ENCODE measurements at regions of chr6 and their contacts with region 1.

Region 1: GRCh38 chr6:169536446-169537170 is 165.2 kb downstream of the WDR27 start:
- DNase-seq: peak; percentile 69
- ATAC-seq: peak; percentile 73
- H3K4me3 ChIP-seq: no peak overlapping the region
- H3K27ac ChIP-seq: no peak overlapping the region
- H3K4me1 ChIP-seq: peaks cover 12% of the 10 kb centered on the region
- H3K27me3 ChIP-seq: no peaks in the 10 kb centered on the region
- CTCF ChIP-seq: no peak

Region 2: DNA sequence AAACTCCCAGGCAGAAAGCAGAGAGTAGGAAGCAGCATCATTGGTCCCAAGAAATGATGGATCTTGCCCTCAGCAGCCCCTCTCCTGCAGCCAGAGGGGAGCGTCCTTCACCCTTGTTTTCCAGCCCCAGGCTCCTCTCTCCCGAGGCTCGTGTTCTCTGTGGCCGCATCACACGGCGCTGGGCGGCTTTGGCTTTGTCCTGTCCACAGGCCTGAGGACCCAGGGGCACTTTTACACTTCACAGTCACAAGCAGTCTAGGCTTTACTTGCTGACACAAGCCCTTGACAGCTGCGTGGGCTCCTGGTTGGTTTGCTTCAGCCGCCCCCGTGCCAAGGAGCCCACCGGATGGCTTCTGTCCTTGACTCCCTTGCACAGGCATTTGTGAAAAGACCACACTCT is 107.6 kb before region 1 on chr6:
- CTCF ChIA-PET with region 1: no interaction called
- POLR2A ChIA-PET with region 1: no interaction called
- intact Hi-C with region 1: no loop called
- DNase-seq: no peak
- ATAC-seq: no peak
- H3K4me3 ChIP-seq: no peak overlapping the region
- H3K27ac ChIP-seq: no peak overlapping the region
- H3K4me1 ChIP-seq: no peaks in the 10 kb centered on the region
- H3K27me3 ChIP-seq: no peaks in the 10 kb centered on the region
- CTCF ChIP-seq: no peak

Region 3: DNA sequence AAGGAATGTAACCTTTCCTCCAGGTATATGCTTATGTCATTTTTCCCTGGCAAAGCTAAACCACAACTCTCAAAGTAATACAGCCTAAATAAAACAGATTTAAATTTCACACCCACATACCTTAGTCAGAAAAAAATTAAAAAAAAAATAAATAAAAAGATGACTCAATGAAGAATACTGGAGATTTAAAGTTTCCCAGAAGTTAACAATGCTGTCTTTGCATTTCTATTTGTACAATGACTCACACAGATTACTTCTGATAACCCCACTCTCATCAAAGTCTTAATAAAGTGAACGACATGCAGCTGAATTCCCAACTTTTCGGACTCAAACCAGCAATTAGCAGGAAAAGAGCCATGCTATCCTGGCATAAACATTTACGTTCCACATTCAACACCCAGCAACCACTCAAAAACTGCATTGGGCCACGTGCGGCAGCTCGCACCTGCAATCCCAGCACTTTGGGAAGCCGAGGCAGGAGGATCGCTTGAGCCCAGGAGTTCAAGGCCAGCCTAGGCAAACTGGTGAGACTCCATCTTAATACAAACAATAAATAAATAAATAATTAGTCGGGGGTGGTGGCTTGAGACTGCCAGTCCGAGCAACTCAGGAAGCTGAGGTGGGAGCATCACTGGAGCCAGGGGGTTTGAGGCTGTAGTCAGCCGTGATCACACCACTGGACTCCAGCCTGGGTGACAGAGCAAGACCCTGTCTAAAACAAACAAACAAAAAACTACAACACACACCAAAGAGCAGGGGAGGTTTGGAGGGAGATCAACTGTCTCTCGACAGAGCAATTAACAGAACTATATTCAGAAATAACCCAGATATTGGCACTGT is 34.7 kb after region 1 on chr6:
- CTCF ChIA-PET with region 1: no interaction called
- POLR2A ChIA-PET with region 1: no interaction called
- intact Hi-C with region 1: loop called (anchors 5 kb)
- DNase-seq: peak; percentile 66
- ATAC-seq: peak; percentile 88
- H3K4me3 ChIP-seq: no peak overlapping the region
- H3K27ac ChIP-seq: peak overlapping the region; percentile 56
- H3K4me1 ChIP-seq: peaks cover 17% of the 10 kb centered on the region
- H3K27me3 ChIP-seq: no peaks in the 10 kb centered on the region
- CTCF ChIP-seq: no peak

Region 4: DNA sequence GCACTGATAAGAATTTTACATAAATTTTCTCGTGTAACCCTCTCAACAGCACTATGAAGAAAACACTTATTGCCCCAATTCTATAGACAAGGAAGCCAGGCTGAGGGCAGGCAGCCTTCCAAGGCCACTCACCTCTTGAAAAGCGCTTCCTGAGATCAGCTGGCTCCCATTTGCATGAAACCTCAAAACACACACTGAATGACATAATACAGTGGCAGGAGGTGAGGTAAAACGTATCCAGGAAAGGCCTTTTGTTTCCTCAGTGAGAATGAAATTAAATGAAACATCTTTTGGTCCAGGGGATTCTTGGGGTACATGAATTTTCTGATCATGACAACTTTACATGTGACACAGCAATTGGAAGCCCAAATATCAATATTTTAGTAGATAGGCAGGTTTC is 52.7 kb after region 1 on chr6:
- CTCF ChIA-PET with region 1: no interaction called
- POLR2A ChIA-PET with region 1: no interaction called
- intact Hi-C with region 1: no loop called
- DNase-seq: no peak
- ATAC-seq: no peak
- H3K4me3 ChIP-seq: no peak overlapping the region
- H3K27ac ChIP-seq: no peak overlapping the region
- H3K4me1 ChIP-seq: no peaks in the 10 kb centered on the region
- H3K27me3 ChIP-seq: no peaks in the 10 kb centered on the region
- CTCF ChIP-seq: no peak

Region 5: DNA sequence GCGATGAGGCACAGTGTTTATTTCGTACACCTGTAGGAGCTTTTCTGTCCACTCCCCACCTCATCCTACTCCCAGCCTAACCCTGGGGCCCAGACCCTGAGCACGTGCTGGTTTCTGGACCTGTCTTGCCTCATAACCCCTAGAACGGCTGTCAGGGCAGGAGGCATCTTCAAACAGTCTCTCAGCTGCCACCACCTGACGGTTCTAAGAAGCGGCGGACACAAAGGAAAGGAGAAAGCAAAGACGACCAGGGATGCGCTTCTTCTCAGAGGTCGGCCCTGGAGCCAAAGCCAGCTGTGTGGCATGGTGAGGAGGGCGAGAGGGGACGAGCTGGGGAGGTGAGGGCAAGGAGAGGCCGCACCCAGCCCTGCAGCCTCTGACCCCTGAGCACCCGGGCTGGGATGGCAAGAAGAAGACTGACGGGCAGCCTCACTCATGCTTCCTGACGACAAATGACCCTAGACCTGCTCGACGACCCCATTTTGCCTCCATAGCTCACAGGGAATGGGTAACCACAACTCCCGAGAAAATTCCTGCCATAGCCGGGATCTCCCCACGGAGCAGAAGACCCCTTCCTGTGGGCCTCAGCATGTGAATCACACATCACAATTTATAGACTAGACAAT is 103.2 kb after region 1 on chr6:
- CTCF ChIA-PET with region 1: no interaction called
- POLR2A ChIA-PET with region 1: interaction called, 31 read pairs
- intact Hi-C with region 1: no loop called
- DNase-seq: no peak
- ATAC-seq: no peak
- H3K4me3 ChIP-seq: no peak overlapping the region
- H3K27ac ChIP-seq: no peak overlapping the region
- H3K4me1 ChIP-seq: no peaks in the 10 kb centered on the region
- H3K27me3 ChIP-seq: no peaks in the 10 kb centered on the region
- CTCF ChIP-seq: no peak